Right ventricle myocardium inferior (tissue), 1 donor: ENCODE measurements at regions of chr9 and their contacts with region 1.

Region 1: GRCh38 chr9:6924988-6925563 is 167.3 kb downstream of the KDM4C start:
- DNase-seq: no peak
- ATAC-seq: peak; percentile 37

Region 2: DNA sequence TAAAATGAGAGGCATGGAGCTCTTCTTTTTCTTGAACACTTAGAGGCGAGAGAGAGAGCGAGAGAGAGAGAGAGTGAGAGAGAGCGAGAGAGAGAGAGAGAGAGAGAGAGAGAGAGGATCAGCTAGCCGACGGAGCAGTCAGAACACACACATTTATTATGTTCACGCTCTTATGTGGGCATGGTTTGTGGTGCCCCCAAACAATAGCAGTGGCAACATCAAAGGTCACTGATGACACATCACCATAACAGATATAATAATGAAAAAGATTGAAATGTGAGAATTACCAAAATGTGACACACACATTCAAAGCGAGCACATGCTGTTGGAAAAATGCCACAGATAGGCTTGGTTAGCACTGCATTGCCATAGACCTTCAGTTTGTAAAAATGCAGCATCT is 51.2 kb before region 1 on chr9:
- intact Hi-C with region 1: loop called (anchors 10 kb)
- DNase-seq: no peak
- ATAC-seq: no peak

Region 3: GRCh38 chr9:6997330-6997729 is 72.3 kb after region 1 on chr9:
- intact Hi-C with region 1: no loop called
- DNase-seq: no peak
- ATAC-seq: no peak

Region 4: DNA sequence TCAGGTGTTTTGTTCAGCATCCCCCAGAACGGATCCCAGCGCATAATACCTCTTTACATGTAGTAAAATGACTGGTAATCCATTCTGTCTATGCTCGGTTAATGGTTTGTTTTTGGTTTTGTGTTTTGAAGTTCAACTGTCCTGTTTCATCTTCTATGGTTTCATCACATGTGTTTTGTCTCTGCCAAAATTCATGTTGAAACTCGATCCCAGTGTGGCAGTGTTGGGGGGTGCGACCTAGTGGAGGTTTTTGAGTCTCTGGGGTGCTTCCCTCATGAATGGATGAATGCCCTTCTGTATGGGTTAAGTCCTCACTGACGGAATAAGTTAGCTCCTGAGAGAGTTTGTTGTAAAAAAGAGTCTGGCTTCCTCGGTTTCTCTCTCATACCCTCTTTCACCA is 150.1 kb after region 1 on chr9:
- intact Hi-C with region 1: no loop called
- DNase-seq: no peak
- ATAC-seq: no peak